ENCODE measurements at regions of chr11 and their contacts with region 1.

Region 1: GRCh38 chr11:8964324-8965320 is at the start of gene TMEM9B:
- DNase-seq: peak; percentile 79
- ATAC-seq: peak; percentile 91
- H3K4me3 ChIP-seq: peak within 1 kb of the TSS; percentile 63
- H3K27ac ChIP-seq: peak within 1 kb of the TSS; percentile 85
- H3K4me1 ChIP-seq: peaks cover 6% of the 10 kb centered on the region
- H3K27me3 ChIP-seq: no peaks in the 10 kb centered on the region
- CTCF ChIP-seq: no peak
- POLR2A ChIP-seq: peak; percentile 72
- RAD21 ChIP-seq: no peak
- total RNA-seq, gene TMEM9B: 25.6 and 40.0 TPM in 2 replicates

Region 2: GRCh38 chr11:8225589-8226036 is 739.0 kb before region 1 on chr11:
- CTCF ChIA-PET with region 1: no interaction called
- POLR2A ChIA-PET with region 1: no interaction called
- dilution Hi-C with region 1: no loop called
- in situ Hi-C with region 1: loop called (anchors 25 kb)
- intact Hi-C with region 1: loop called (anchors 5 kb)
- DNase-seq: peak; percentile 52
- ATAC-seq: peak; percentile 79
- H3K4me3 ChIP-seq: no peak overlapping the region
- H3K27ac ChIP-seq: no peak overlapping the region
- H3K4me1 ChIP-seq: no peaks in the 10 kb centered on the region; the same call in 1 of the 2 replicates
- H3K27me3 ChIP-seq: peaks cover 22% of the 10 kb centered on the region
- CTCF ChIP-seq: peak; percentile 86
- POLR2A ChIP-seq: no peak
- RAD21 ChIP-seq: peak; percentile 85

Region 3: DNA sequence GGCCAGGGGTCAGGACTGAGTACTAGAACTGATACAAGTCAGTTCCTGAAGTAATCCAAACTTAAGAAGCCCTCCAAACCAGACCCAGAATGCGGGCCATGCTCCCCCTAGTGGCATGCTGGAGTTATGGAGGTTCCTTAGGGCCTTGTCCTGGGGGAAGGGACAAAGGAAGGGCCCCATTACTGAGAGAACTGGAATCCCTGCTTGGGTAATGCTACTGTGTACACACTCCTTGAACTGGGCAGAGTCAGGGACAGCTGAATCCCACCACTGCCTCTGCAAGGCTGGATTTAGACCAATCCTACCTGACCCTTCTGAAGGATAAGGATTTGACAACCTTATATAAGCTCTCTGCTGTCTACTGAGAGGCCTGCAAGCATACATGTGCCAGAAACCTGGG is 151.0 kb before region 1 on chr11:
- CTCF ChIA-PET with region 1: no interaction called
- POLR2A ChIA-PET with region 1: no interaction called
- dilution Hi-C with region 1: no loop called
- in situ Hi-C with region 1: no loop called
- intact Hi-C with region 1: loop called (anchors 1 kb)
- DNase-seq: peak; percentile 89
- ATAC-seq: peak; percentile 65
- H3K4me3 ChIP-seq: no peak overlapping the region
- H3K27ac ChIP-seq: peak overlapping the region; percentile 54; the same call in 1 of the 2 replicates
- H3K4me1 ChIP-seq: peaks cover 28% of the 10 kb centered on the region
- H3K27me3 ChIP-seq: no peaks in the 10 kb centered on the region
- CTCF ChIP-seq: peak; percentile 93
- POLR2A ChIP-seq: no peak
- RAD21 ChIP-seq: peak; percentile 89

Region 4: GRCh38 chr11:8841899-8842298 is 122.7 kb before region 1 on chr11:
- CTCF ChIA-PET with region 1: no interaction called
- POLR2A ChIA-PET with region 1: no interaction called
- dilution Hi-C with region 1: no loop called
- in situ Hi-C with region 1: no loop called
- intact Hi-C with region 1: no loop called
- DNase-seq: peak; percentile 42
- ATAC-seq: no peak
- H3K4me3 ChIP-seq: no peak overlapping the region
- H3K27ac ChIP-seq: no peak overlapping the region
- H3K4me1 ChIP-seq: peaks cover 29% of the 10 kb centered on the region
- H3K27me3 ChIP-seq: no peaks in the 10 kb centered on the region
- CTCF ChIP-seq: no peak
- POLR2A ChIP-seq: no peak
- RAD21 ChIP-seq: no peak

Region 5: DNA sequence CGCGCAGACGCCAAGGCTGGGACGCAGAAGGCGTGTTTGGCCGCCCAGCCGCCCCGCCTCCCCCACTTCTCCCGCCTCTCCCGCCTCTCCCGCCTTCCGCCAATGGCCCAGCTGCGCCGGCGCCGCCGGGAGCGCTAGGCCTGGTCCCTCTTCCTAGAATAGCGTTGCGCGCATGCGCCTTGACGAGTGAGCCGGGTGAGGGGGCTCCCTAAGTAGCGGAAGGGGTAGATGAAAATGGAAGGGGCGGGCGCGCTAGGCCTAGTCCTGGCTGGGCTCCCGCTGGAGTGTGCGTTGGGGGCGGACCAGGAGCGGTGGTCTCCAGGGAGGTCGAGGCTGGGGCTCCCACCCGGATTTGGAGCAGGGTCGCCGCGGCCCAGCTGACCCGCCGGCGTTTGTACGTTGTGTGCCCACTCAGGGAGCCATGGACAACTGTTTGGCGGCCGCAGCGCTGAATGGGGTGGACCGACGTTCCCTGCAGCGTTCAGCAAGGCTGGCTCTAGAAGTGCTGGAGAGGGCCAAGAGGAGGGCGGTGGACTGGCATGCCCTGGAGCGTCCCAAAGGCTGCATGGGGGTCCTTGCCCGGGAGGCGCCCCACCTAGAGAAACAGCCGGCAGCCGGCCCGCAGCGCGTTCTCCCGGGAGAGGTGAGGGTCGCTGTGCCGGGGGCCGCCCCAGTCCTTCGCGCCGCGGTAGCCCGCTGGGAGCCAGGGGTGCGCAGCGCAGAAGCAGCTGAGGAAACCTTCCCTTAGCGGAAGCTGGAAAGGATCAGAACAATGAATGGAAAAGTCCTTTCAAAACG is 53.4 kb before region 1 on chr11 and contains the start of gene AKIP1:
- CTCF ChIA-PET with region 1: interaction called, 8 read pairs
- POLR2A ChIA-PET with region 1: interaction called, 4 read pairs
- dilution Hi-C with region 1: no loop called
- in situ Hi-C with region 1: loop called (anchors 5 kb)
- intact Hi-C with region 1: no loop called
- DNase-seq: peak; percentile 94
- ATAC-seq: peak; percentile 92
- H3K4me3 ChIP-seq: peak within 1 kb of the TSS; percentile 91
- H3K27ac ChIP-seq: peak within 1 kb of the TSS; percentile 97
- H3K4me1 ChIP-seq: peaks cover 11% of the 10 kb centered on the region
- H3K27me3 ChIP-seq: no peaks in the 10 kb centered on the region
- CTCF ChIP-seq: no peak
- POLR2A ChIP-seq: 0 out of 2 replicates have a peak, but pooled peaks have one; percentile 24
- RAD21 ChIP-seq: 0 out of 2 replicates have a peak, but pooled peaks have one; percentile 3
- total RNA-seq, gene AKIP1: 27.8 and 33.9 TPM in 2 replicates

Region 6: GRCh38 chr11:8948886-8949285 is 15.7 kb before region 1 on chr11:
- CTCF ChIA-PET with region 1: interaction called, 16 read pairs
- POLR2A ChIA-PET with region 1: no interaction called
- dilution Hi-C with region 1: no loop called
- in situ Hi-C with region 1: no loop called
- intact Hi-C with region 1: no loop called
- DNase-seq: no peak
- ATAC-seq: no peak
- H3K4me3 ChIP-seq: no peak overlapping the region
- H3K27ac ChIP-seq: no peak overlapping the region
- H3K4me1 ChIP-seq: peaks cover 2% of the 10 kb centered on the region
- H3K27me3 ChIP-seq: no peaks in the 10 kb centered on the region
- CTCF ChIP-seq: no peak
- POLR2A ChIP-seq: no peak
- RAD21 ChIP-seq: no peak

Region 7: DNA sequence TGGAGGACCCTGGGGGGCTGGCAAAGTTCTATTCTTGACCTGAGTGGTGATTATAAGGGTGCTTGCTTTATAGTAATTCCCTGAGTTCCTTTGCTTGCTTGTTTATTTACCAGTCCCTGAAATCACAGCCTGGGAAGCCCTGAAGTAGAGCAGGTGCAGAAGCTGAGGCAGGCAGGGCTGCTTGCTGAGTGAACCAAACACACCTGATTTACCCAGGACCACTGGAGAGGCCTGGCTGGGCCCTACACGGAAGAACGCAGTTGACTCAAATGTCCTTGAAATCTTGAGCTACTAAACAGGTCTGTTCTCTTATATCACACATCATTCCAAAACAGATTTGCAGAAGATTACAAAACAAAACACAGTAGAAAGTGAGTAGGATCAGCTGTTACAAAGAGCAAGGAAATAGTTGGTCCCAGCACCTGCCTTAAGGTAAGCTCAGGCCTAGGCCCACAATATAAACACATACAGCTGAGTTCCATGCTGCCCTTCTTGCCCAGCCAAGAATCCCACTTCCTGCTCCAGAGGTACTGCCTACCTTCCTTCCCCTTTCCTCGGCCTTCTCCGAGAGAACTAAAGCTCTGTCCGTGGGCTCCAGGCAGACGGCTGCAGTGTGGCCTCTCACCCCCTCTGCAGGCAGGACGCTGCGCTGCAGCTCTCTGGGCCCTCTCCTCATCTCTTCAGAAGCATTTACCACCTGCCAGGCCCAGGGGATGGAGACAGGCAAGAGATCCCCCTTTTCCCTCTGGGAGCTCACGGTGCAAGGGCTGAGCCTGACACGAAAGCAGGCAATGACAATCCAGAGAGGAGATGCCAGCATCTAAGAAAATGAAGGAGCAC is 172.9 kb after region 1 on chr11:
- CTCF ChIA-PET with region 1: interaction called, 5 read pairs
- POLR2A ChIA-PET with region 1: no interaction called
- dilution Hi-C with region 1: no loop called
- in situ Hi-C with region 1: no loop called
- intact Hi-C with region 1: loop called (anchors 1 kb)
- DNase-seq: peak; percentile 69
- ATAC-seq: peak; percentile 96
- H3K4me3 ChIP-seq: no peak overlapping the region
- H3K27ac ChIP-seq: no peak overlapping the region
- H3K4me1 ChIP-seq: peaks cover 8% of the 10 kb centered on the region
- H3K27me3 ChIP-seq: no peaks in the 10 kb centered on the region
- CTCF ChIP-seq: peak; percentile 92
- POLR2A ChIP-seq: peak; percentile 25; the same call in 1 of the 2 replicates
- RAD21 ChIP-seq: peak; percentile 92